ENCODE measurements at regions of chr22 and their contacts with region 1.

Region 1: GRCh38 chr22:38696606-38697424 is 3.9 kb downstream of the JOSD1 start:
- DNase-seq: peak; percentile 92
- ATAC-seq: peak; percentile 22
- H3K4me3 ChIP-seq: no peak overlapping the region
- H3K27ac ChIP-seq: peak overlapping the region; percentile 62; the same call in 1 of the 2 replicates
- H3K4me1 ChIP-seq: peaks cover 11% of the 10 kb centered on the region
- H3K27me3 ChIP-seq: no peaks in the 10 kb centered on the region
- CTCF ChIP-seq: no peak
- POLR2A ChIP-seq: no peak
- RAD21 ChIP-seq: no peak

Region 2: GRCh38 chr22:38681784-38682335 is 15.0 kb before region 1 on chr22 and contains the start of gene TOMM22:
- CTCF ChIA-PET with region 1: interaction called, 7 read pairs
- POLR2A ChIA-PET with region 1: no interaction called
- dilution Hi-C with region 1: no loop called
- in situ Hi-C with region 1: no loop called
- intact Hi-C with region 1: loop called (anchors 2 kb)
- DNase-seq: peak; percentile 83
- ATAC-seq: peak; percentile 100
- H3K4me3 ChIP-seq: peak within 1 kb of the TSS; percentile 83
- H3K27ac ChIP-seq: peak within 1 kb of the TSS; percentile 85
- H3K4me1 ChIP-seq: no peaks in the 10 kb centered on the region; the same call in 1 of the 2 replicates
- H3K27me3 ChIP-seq: no peaks in the 10 kb centered on the region
- CTCF ChIP-seq: peak; percentile 82
- POLR2A ChIP-seq: peak; percentile 81
- RAD21 ChIP-seq: peak; percentile 41
- total RNA-seq, gene TOMM22: 78.0 and 139 TPM in 2 replicates

Region 3: GRCh38 chr22:38724926-38725571 is 28.2 kb after region 1 on chr22:
- CTCF ChIA-PET with region 1: no interaction called
- POLR2A ChIA-PET with region 1: no interaction called
- dilution Hi-C with region 1: no loop called
- in situ Hi-C with region 1: no loop called
- intact Hi-C with region 1: no loop called
- DNase-seq: peak; percentile 41
- ATAC-seq: peak; percentile 81
- H3K4me3 ChIP-seq: no peak overlapping the region
- H3K27ac ChIP-seq: no peak overlapping the region
- H3K4me1 ChIP-seq: no peaks in the 10 kb centered on the region
- H3K27me3 ChIP-seq: no peaks in the 10 kb centered on the region
- CTCF ChIP-seq: peak; percentile 47
- POLR2A ChIP-seq: no peak
- RAD21 ChIP-seq: no peak; the same call in 1 of the 2 replicates

Region 4: GRCh38 chr22:39685336-39686177 is 988.7 kb after region 1 on chr22:
- CTCF ChIA-PET with region 1: no interaction called
- POLR2A ChIA-PET with region 1: no interaction called
- dilution Hi-C with region 1: no loop called
- in situ Hi-C with region 1: no loop called
- intact Hi-C with region 1: no loop called
- DNase-seq: no peak
- ATAC-seq: no peak
- H3K4me3 ChIP-seq: no peak overlapping the region
- H3K27ac ChIP-seq: no peak overlapping the region
- H3K4me1 ChIP-seq: no peaks in the 10 kb centered on the region
- H3K27me3 ChIP-seq: peaks cover 61% of the 10 kb centered on the region
- CTCF ChIP-seq: no peak
- POLR2A ChIP-seq: no peak
- RAD21 ChIP-seq: no peak

Measured in IMR-90 (cell line).